Activated CD4-positive, alpha-beta T cell treated with anti-CD3 and anti-CD28 coated beads for 36 hours (primary cell): ENCODE measurements at regions of chr17 and their contacts with region 1.

Region 1: DNA sequence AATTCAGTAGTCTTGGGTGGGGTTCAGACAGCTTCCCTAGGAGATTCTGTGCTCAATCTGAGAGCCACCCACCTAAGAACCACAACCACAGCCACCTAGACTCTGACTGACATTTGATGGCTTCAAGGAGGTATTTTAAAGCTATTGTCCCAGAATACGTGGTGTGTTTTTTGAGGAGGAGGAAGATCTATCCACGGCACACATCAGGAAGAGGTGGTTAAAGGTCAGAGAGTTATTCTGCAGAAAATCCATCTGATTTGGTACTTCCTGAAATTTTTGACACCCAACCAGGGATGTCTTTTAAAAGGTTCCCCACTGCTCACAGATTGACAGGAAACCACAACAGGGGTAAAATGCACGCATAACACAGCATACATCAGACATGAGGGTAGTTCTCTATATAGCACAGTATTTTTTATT is 25.1 kb downstream of the SMARCE1 start:
- DNase-seq: peak; percentile 41
- ATAC-seq: peak; percentile 25
- H3K4me3 Mint-ChIP-seq: no peak overlapping the region
- H3K27ac Mint-ChIP-seq: peak overlapping the region; percentile 77
- H3K4me1 Mint-ChIP-seq: peaks cover 61% of the 10 kb centered on the region
- H3K27me3 Mint-ChIP-seq: no peaks in the 10 kb centered on the region

Region 2: DNA sequence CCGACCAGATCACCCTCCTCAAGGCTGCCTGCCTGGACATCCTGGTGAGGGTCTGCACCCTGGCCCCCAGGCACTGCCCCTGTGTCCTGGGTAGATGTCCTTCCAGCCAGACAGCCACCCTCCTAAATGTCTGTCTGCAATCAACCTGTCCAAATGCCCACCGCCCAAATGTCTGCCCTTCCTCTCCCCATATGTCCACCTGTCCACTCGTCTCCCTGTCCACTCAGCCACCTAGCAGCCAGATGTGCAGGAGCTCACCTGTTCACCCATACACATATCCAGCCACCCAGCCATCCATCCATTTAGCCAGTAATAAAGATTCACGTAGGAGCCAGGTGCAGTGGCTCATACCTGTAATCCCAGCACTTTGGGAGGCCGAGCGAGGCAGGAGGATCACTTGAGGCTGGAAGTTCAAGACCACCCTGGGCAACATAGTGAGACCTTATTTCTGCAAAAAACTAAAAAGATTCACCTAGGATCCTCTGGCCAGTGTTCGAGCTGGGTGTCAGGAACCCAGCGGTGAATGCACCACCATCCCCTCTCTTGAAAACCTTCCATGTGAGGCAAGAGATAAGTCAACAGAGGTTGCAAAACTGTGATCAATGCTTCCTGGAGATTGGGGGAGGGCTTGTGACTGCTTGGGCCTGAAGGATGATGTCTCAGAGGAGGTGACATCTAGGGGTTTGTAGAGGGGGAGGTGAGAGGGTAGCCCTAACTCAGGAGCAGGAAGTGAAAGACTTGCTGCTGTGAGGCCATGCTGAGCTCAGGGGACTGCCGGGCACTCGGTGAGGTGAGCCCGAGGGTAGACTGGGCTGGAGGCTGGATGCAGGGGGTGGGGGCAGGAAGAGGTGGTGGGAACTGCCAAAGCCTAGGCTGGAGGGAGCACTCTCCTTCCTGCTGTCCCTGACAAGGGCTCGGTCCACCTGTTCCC is 269.8 kb before region 1 on chr17:
- CTCF ChIA-PET with region 1: no interaction called
- POLR2A ChIA-PET with region 1: no interaction called
- intact Hi-C with region 1: no loop called
- DNase-seq: no peak
- ATAC-seq: peak; percentile 54
- H3K4me3 Mint-ChIP-seq: no peak overlapping the region
- H3K27ac Mint-ChIP-seq: peak overlapping the region; percentile 18
- H3K4me1 Mint-ChIP-seq: peaks cover 14% of the 10 kb centered on the region
- H3K27me3 Mint-ChIP-seq: no peaks in the 10 kb centered on the region

Region 3: GRCh38 chr17:40608061-40608588 is 14.4 kb before region 1 on chr17:
- CTCF ChIA-PET with region 1: interaction called, 11 read pairs
- POLR2A ChIA-PET with region 1: interaction called, 6 read pairs
- intact Hi-C with region 1: no loop called
- DNase-seq: peak; percentile 52
- ATAC-seq: peak; percentile 61
- H3K4me3 Mint-ChIP-seq: peak overlapping the region; percentile 39
- H3K27ac Mint-ChIP-seq: peak overlapping the region; percentile 86
- H3K4me1 Mint-ChIP-seq: peaks cover 98% of the 10 kb centered on the region
- H3K27me3 Mint-ChIP-seq: no peaks in the 10 kb centered on the region

Region 4: GRCh38 chr17:40647624-40648383 is 25.3 kb after region 1 on chr17 and contains the start of gene SMARCE1:
- CTCF ChIA-PET with region 1: interaction called, 18 read pairs
- POLR2A ChIA-PET with region 1: interaction called, 4 read pairs
- intact Hi-C with region 1: loop called (anchors 1 to 2 kb)
- DNase-seq: peak; percentile 79
- ATAC-seq: peak; percentile 81
- H3K4me3 Mint-ChIP-seq: peak within 1 kb of the TSS; percentile 97
- H3K27ac Mint-ChIP-seq: peak within 1 kb of the TSS; percentile 99
- H3K4me1 Mint-ChIP-seq: peaks cover 40% of the 10 kb centered on the region
- H3K27me3 Mint-ChIP-seq: no peaks in the 10 kb centered on the region
- total RNA-seq, gene SMARCE1: 99.7 to 122 TPM

Region 5: GRCh38 chr17:40726919-40727318 is 104.4 kb after region 1 on chr17:
- CTCF ChIA-PET with region 1: no interaction called
- POLR2A ChIA-PET with region 1: no interaction called
- intact Hi-C with region 1: loop called (anchors 1 to 2 kb)
- DNase-seq: no peak
- ATAC-seq: no peak
- H3K4me3 Mint-ChIP-seq: no peak overlapping the region
- H3K27ac Mint-ChIP-seq: no peak overlapping the region
- H3K4me1 Mint-ChIP-seq: peaks cover 2% of the 10 kb centered on the region
- H3K27me3 Mint-ChIP-seq: peaks cover 19% of the 10 kb centered on the region

Region 6: GRCh38 chr17:40791787-40792436 is 169.4 kb after region 1 on chr17:
- CTCF ChIA-PET with region 1: no interaction called
- POLR2A ChIA-PET with region 1: no interaction called
- intact Hi-C with region 1: loop called (anchors 1 to 5 kb)
- DNase-seq: no peak
- ATAC-seq: no peak
- H3K4me3 Mint-ChIP-seq: no peak overlapping the region
- H3K27ac Mint-ChIP-seq: no peak overlapping the region
- H3K4me1 Mint-ChIP-seq: no peaks in the 10 kb centered on the region
- H3K27me3 Mint-ChIP-seq: peaks cover 17% of the 10 kb centered on the region